ENCODE measurements at regions of chr5 and their contacts with region 1.

Region 1: DNA sequence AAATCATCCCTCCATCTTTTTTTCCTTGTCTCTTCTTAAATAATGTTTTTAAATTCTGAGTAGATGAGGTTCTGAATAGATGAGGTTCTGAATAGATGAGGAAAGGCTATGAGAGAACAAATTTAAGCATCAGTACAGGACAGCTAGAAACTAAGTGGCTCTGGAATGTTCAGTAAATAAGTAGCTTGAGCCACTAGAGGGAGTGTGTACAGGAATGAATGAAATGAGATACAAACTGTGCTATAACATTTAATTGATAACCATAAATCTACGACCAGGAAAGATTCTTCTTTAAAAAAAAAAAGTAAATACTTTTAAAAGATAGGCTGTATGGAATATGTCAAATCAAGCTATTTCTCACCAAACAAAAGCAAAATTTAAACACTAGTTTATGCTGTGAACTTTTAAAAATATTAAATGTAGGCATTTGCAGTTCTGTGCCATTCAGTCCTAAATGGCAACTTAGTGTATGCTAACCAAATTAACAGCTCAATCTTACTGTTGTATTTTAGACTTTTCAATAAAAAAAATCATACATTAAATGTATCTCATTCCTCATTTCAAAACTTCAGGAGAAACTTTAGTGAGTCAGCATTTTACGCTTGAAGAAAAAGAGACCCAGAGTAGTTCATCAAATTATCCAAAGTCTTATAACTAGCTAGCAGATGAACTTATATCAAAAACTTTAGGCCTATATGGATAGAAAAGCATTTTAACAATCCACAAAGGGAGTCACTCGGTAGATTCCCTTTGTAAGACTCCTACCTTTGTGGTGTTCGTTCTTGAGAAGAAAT is 70.4 kb upstream of the SNX2 start:
- DNase-seq: peak; percentile 39
- H3K4me3 ChIP-seq: no peak overlapping the region
- H3K27ac ChIP-seq: no peak overlapping the region
- H3K4me1 ChIP-seq: no peaks in the 10 kb centered on the region
- H3K27me3 ChIP-seq: no peaks in the 10 kb centered on the region
- CTCF ChIP-seq: peak; percentile 38 to 50
- POLR2A ChIP-seq: no peak

Region 2: GRCh38 chr5:122500245-122501075 is 204.0 kb before region 1 on chr5:
- CTCF ChIA-PET with region 1: no interaction called
- POLR2A ChIA-PET with region 1: no interaction called
- dilution Hi-C with region 1: no loop called
- intact Hi-C with region 1: no loop called
- DNase-seq: peak; percentile 49
- H3K4me3 ChIP-seq: no peak overlapping the region
- H3K27ac ChIP-seq: no peak overlapping the region
- H3K4me1 ChIP-seq: no peaks in the 10 kb centered on the region
- H3K27me3 ChIP-seq: peaks cover 3 to 6% of the 10 kb centered on the region in 2 experiments
- CTCF ChIP-seq: peak; percentile 37 to 55
- POLR2A ChIP-seq: no peak

Region 3: GRCh38 chr5:122586351-122586750 is 118.1 kb before region 1 on chr5:
- CTCF ChIA-PET with region 1: no interaction called
- POLR2A ChIA-PET with region 1: no interaction called
- dilution Hi-C with region 1: no loop called
- intact Hi-C with region 1: no loop called
- DNase-seq: no peak
- H3K4me3 ChIP-seq: no peak overlapping the region
- H3K27ac ChIP-seq: no peak overlapping the region
- H3K4me1 ChIP-seq: no peaks in the 10 kb centered on the region
- H3K27me3 ChIP-seq: peaks cover 0 to 1% of the 10 kb centered on the region in 2 experiments
- CTCF ChIP-seq: no peak
- POLR2A ChIP-seq: no peak

Region 4: DNA sequence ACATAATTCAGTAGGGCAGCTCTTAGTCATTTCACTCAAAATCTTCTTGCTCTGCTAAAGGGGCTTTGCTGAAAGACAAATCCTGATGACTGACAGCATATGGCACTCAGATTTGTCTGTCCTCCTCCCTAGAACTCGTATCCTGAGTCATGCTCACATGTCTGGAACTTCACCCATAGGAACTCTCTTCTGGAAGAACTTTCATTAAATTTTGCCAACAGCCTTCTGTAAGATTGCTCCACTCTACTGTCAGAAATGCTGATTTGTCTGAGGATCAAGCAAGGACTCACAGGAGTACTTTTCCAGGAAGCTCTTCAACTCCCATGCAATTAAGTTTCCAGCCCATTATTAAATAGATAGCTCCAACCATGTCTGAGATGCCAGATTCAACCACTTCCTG is 10.7 kb after region 1 on chr5:
- CTCF ChIA-PET with region 1: interaction called, 26 read pairs
- POLR2A ChIA-PET with region 1: no interaction called
- dilution Hi-C with region 1: no loop called
- intact Hi-C with region 1: no loop called
- DNase-seq: no peak
- H3K4me3 ChIP-seq: no peak overlapping the region
- H3K27ac ChIP-seq: no peak overlapping the region
- H3K4me1 ChIP-seq: peaks cover 6% of the 10 kb centered on the region
- H3K27me3 ChIP-seq: peaks cover 0 to 1% of the 10 kb centered on the region in 2 experiments
- CTCF ChIP-seq: no peak
- POLR2A ChIP-seq: no peak

Region 5: DNA sequence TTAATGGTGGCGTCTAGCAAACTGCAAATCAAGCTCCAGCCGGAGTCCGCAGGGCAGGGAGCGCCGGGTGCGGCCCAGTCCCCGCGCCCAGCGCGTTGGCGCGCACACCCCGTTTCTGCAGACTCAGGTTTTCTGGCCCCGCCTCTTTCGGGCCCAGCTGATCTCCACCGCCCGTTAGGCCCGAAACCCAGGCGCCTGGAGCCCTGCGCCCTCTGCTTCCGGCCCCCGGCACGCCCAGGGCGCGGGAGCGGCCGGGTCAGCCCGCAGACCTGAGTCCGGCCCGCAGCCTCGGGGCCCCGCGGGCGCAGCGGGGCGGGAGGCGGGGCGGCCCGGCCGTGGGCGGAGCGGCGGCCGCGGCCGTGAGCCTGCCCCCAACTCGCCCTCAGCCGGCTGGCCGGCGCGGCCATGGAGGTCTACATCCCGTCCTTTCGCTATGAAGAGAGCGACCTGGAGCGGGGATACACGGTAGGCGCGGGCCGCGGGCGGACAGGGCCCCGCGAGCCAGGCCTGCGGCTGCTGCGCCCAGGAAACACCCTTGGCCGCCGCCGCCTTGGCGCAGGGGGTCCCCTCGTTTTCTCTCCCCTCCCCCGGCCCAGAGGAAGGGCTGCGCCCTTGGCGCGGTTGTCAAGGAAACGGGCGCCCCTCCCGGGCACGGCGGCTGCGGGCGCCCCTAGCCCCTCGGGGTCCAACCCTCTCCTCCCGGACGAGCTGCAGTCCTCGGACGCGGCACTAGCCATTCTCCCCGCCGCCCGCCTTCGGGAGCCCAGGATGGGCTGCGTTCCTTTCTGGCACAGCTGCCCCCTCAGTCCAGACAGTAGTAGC is 141.0 kb after region 1 on chr5 and contains the start of gene SNX24:
- CTCF ChIA-PET with region 1: interaction called, 21 read pairs
- POLR2A ChIA-PET with region 1: no interaction called
- dilution Hi-C with region 1: no loop called
- intact Hi-C with region 1: loop called (anchors 1 kb)
- DNase-seq: peak; percentile 71
- H3K4me3 ChIP-seq: peak within 1 kb of the TSS; percentile 76 to 95 (median 93)
- H3K27ac ChIP-seq: peak within 1 kb of the TSS; percentile 0
- H3K4me1 ChIP-seq: peaks cover 18% of the 10 kb centered on the region
- H3K27me3 ChIP-seq: no peaks in the 10 kb centered on the region
- CTCF ChIP-seq: no peak
- POLR2A ChIP-seq: peak; percentile 73
- total RNA-seq, gene SNX24: 8.8 and 14.9 TPM in 2 replicates

Region 6: GRCh38 chr5:123089914-123090670 is 385.7 kb after region 1 on chr5:
- CTCF ChIA-PET with region 1: no interaction called
- POLR2A ChIA-PET with region 1: no interaction called
- dilution Hi-C with region 1: no loop called
- intact Hi-C with region 1: loop called (anchors 10 kb)
- DNase-seq: peak; percentile 13
- H3K4me3 ChIP-seq: peak overlapping the region; percentile 18 to 32 (median 21)
- H3K27ac ChIP-seq: no peak overlapping the region
- H3K4me1 ChIP-seq: peaks cover 16% of the 10 kb centered on the region
- H3K27me3 ChIP-seq: peaks cover 82 to 99% of the 10 kb centered on the region in 2 experiments
- CTCF ChIP-seq: no peak
- POLR2A ChIP-seq: no peak

Region 7: DNA sequence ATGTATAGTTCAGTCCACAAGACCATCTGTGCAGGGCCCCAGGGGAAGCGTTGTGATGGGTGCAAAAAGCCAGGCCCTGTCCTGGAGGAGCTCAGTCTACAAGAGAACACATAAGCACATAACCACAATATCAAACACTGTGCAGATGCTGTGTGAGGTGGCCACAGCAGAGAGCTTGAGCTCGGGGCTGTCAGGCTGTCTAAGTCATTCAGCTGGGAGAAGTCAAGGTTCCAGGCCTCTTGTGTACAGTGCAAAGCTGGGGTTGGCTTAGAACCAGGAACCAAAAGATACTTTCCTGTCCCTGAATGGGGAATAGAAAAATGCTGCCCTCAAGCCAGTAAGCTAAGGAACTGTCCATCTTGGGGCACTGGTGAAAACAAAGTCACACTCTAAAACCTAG is 459.6 kb after region 1 on chr5:
- CTCF ChIA-PET with region 1: no interaction called
- POLR2A ChIA-PET with region 1: no interaction called
- dilution Hi-C with region 1: no loop called
- intact Hi-C with region 1: no loop called
- DNase-seq: no peak
- H3K4me3 ChIP-seq: no peak overlapping the region
- H3K27ac ChIP-seq: no peak overlapping the region
- H3K4me1 ChIP-seq: no peaks in the 10 kb centered on the region
- H3K27me3 ChIP-seq: no peaks in the 10 kb centered on the region
- CTCF ChIP-seq: no peak
- POLR2A ChIP-seq: no peak